Activated T-helper 2 cell treated with anti-CD3 and anti-CD28 coated beads, Interferon-gamma antibody, Interleukin-2, Interleukin-4, amounts not matched to agents 10 μg/mL and 5 μg/mL and 100 μg/mL, durations not matched to agents 14 hours and 24 hours and 36 hours (primary cell): ENCODE measurements at regions of chr12 and their contacts with region 1.

Region 1: GRCh38 chr12:40107098-40107802 is 1.4 kb upstream of the SLC2A13 start:
- DNase-seq: peak; percentile 73
- H3K4me3 Mint-ChIP-seq: peak overlapping the region; percentile 47
- H3K27ac Mint-ChIP-seq: no peak overlapping the region
- H3K4me1 Mint-ChIP-seq: peaks cover 25% of the 10 kb centered on the region
- H3K27me3 Mint-ChIP-seq: peaks cover 31% of the 10 kb centered on the region

Region 2: DNA sequence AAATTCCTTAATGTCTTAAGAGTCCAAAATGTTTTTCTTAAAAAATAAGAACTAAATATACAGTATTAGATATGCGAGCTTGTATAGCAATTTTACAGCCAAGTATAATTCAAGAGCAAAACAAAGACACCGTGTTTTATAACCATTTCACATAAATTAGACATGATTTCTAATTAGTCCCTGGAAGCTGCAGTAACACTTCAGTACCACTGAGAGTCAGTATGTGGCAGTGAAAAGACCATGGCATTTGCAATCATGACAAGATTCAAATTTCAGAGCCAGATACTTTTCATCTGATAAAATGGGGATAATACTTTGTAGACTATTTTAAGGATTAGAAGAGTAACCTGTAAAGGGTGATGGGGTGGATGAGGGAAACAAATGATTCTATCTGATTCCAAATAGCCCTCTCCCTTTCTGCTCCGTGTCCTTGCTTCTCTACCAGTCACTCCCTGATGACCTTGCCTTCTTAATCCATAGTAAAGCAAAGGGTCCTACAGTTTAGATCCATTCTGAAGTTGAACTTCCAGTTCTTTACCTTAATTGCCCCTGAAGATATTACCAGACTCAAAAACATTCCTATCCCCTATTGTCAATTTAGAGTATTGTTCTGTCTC is 342.2 kb before region 1 on chr12:
- intact Hi-C with region 1: loop called (anchors 2 kb)
- DNase-seq: no peak
- H3K4me3 Mint-ChIP-seq: no peak overlapping the region
- H3K27ac Mint-ChIP-seq: no peak overlapping the region
- H3K4me1 Mint-ChIP-seq: no peaks in the 10 kb centered on the region
- H3K27me3 Mint-ChIP-seq: peaks cover 2% of the 10 kb centered on the region

Region 3: GRCh38 chr12:40010899-40011774 is 96.1 kb before region 1 on chr12:
- intact Hi-C with region 1: loop called (anchors 1 kb)
- DNase-seq: peak; percentile 39
- H3K4me3 Mint-ChIP-seq: peak overlapping the region; percentile 51
- H3K27ac Mint-ChIP-seq: no peak overlapping the region
- H3K4me1 Mint-ChIP-seq: peaks cover 16% of the 10 kb centered on the region
- H3K27me3 Mint-ChIP-seq: peaks cover 1% of the 10 kb centered on the region

Region 4: GRCh38 chr12:40146800-40147797 is 39.8 kb after region 1 on chr12:
- intact Hi-C with region 1: loop called (anchors 5 kb)
- DNase-seq: no peak
- H3K4me3 Mint-ChIP-seq: no peak overlapping the region
- H3K27ac Mint-ChIP-seq: no peak overlapping the region
- H3K4me1 Mint-ChIP-seq: no peaks in the 10 kb centered on the region
- H3K27me3 Mint-ChIP-seq: peaks cover 17% of the 10 kb centered on the region